Naive thymus-derived CD4-positive, alpha-beta T cell (primary cell): ENCODE measurements at regions of chr2 and their contacts with region 1.

Region 1: DNA sequence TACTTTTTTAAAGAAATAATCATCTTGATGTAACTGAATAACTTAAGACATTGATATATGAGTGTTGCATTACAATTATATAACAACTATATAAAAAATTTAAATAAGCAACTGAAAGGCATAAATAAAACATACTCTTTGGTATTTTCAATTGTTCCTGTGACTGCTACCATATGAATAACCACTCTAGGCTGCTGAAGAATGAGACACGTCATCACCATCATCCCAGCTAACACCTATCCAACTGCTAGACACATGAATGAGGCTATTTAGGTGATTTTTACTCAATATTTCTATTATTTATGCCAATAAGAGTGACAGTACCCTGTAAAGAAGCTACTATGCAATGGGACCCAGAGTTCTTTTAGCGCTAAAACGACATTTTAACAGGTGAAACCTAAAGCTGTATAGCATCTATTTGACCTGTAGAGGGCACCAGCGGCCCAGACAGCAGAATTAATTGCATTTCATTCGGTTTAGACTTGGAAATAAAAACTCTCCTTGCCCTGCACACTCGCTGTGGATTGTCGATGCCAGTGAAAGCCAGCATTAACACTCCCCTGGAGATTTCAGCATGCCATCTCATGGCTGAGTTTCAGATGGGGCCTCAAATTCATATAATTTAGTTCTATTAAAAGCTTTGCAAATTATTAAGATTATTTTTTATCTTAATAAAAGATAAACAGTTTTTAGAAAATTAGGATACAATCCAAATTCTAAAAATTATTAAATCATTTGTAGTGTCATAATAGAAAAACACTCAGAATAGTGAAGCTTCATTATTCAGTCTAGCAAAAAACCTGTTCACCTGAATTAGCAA is 89.4 kb upstream of the MAP2 start:
- DNase-seq: peak in 5 of 9 donors; percentile 0 to 23 (median 9)
- ATAC-seq: peak; percentile 29
- H3K4me3 ChIP-seq: no peak overlapping the region
- H3K4me3 Mint-ChIP-seq: no peak overlapping the region
- H3K27ac ChIP-seq: no peak overlapping the region
- H3K27ac Mint-ChIP-seq: no peak overlapping the region
- H3K4me1 ChIP-seq: no peaks in the 10 kb centered on the region
- H3K4me1 Mint-ChIP-seq: no peaks in the 10 kb centered on the region
- H3K27me3 ChIP-seq: no peaks in the 10 kb centered on the region
- H3K27me3 Mint-ChIP-seq: peaks cover 0 to 7% (median 3%) of the 10 kb centered on the region in 5 donors

Region 2: DNA sequence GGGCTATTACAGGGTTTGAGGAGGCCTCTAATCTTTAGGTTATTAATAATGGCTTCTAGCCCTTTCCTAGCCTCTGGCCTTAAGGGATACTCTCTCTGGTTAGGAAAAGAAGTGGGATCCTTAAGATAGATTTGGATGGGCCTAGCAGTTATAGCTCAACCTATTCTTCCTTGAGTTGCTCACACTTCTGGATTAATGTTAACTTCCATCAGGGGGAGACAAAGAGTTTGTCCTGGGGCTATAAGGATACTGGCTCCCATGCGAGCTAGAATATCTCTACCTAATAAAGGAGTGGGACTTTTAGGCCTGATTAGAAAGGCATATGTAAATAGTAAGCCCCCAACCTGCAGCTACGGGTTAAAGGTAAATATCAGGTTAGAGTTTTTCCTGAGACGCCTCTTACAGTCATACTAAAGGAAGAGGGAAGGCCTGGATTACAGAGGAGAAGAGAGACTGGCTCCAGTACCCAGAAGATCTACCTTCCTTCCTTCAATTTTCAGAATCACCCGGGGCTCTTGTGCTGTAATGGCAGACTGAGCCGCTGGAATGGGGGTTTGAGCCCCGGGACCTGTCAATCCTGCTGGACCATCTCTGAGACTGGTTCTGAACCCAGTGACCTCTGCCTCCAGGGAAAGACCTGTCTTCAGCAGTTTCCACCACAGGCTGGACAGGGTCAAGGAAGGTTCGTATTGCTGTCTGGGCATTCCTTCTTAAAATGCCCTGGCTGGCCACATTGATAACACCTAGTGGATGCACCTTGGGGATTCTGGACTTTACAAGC is 941.9 kb before region 1 on chr2:
- CTCF ChIA-PET with region 1: no interaction called
- POLR2A ChIA-PET with region 1: no interaction called
- intact Hi-C with region 1: loop called in 1 of 2 experiments (anchors 2 kb)
- DNase-seq: no peak
- ATAC-seq: no peak
- H3K4me3 ChIP-seq: no peak overlapping the region
- H3K4me3 Mint-ChIP-seq: no peak overlapping the region
- H3K27ac ChIP-seq: no peak overlapping the region
- H3K27ac Mint-ChIP-seq: no peak overlapping the region
- H3K4me1 ChIP-seq: no peaks in the 10 kb centered on the region
- H3K4me1 Mint-ChIP-seq: no peaks in the 10 kb centered on the region
- H3K27me3 ChIP-seq: no peaks in the 10 kb centered on the region
- H3K27me3 Mint-ChIP-seq: peaks cover 5 to 22% (median 11%) of the 10 kb centered on the region in 5 donors

Region 3: DNA sequence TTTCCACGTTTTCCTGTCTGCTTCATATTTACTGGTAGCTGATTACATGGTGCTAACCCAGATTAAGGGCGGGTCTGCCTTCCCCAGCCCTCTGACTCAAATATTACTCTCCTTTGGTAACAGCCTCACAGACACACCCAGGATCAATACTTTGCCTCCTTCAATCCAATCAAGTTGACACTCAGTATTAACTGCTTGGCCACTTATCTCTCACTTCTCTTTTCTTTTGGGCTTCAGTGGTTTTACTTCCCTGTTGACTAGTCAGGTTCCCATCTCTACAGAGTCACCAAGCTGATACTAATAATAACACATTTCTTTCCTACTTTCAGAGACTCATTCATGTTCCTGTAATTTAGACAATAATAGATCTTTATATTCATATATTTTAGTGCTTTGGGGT is 212.7 kb before region 1 on chr2:
- CTCF ChIA-PET with region 1: no interaction called
- POLR2A ChIA-PET with region 1: no interaction called
- intact Hi-C with region 1: no loop called
- DNase-seq: no peak
- ATAC-seq: peak; percentile 56
- H3K4me3 ChIP-seq: no peak overlapping the region
- H3K4me3 Mint-ChIP-seq: no peak overlapping the region
- H3K27ac ChIP-seq: no peak overlapping the region
- H3K27ac Mint-ChIP-seq: no peak overlapping the region
- H3K4me1 ChIP-seq: no peaks in the 10 kb centered on the region
- H3K4me1 Mint-ChIP-seq: no peaks in the 10 kb centered on the region
- H3K27me3 ChIP-seq: no peaks in the 10 kb centered on the region
- H3K27me3 Mint-ChIP-seq: no peaks in the 10 kb centered on the region

Region 4: DNA sequence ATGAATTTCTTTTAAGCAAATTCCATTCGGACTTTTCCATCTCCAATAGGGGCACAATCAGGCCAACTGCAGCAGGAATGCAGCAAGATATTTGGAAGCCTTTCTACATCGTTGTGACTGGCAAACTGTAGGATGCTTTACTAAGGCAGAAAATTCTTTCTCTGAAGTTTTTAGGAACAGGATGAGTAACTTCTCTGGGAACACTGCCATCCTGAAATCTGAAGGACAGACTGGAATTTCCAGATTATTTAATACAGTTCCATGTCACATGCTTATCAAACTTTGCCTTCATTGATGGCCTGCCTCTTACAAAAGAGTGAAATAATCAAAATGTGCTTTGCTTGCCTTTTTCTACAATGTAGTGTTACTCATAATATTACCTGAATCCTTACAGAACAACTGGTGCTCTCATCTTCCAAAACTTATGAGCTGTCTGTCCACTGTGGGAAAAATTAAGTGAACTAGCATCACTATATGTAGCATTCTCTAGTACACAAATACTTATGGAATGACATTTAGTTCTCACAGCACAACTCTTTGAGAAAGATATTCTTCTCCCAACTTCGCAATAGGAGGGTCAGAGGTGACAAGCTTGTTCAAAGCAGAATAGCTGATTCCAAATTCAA is 57.5 kb after region 1 on chr2:
- CTCF ChIA-PET with region 1: no interaction called
- POLR2A ChIA-PET with region 1: no interaction called
- intact Hi-C with region 1: no loop called
- DNase-seq: no peak
- ATAC-seq: no peak
- H3K4me3 ChIP-seq: no peak overlapping the region
- H3K4me3 Mint-ChIP-seq: no peak overlapping the region
- H3K27ac ChIP-seq: no peak overlapping the region
- H3K27ac Mint-ChIP-seq: no peak overlapping the region
- H3K4me1 ChIP-seq: no peaks in the 10 kb centered on the region
- H3K4me1 Mint-ChIP-seq: no peaks in the 10 kb centered on the region
- H3K27me3 ChIP-seq: no peaks in the 10 kb centered on the region
- H3K27me3 Mint-ChIP-seq: peaks cover 0 to 5% (median 0%) of the 10 kb centered on the region in 5 donors

Region 5: DNA sequence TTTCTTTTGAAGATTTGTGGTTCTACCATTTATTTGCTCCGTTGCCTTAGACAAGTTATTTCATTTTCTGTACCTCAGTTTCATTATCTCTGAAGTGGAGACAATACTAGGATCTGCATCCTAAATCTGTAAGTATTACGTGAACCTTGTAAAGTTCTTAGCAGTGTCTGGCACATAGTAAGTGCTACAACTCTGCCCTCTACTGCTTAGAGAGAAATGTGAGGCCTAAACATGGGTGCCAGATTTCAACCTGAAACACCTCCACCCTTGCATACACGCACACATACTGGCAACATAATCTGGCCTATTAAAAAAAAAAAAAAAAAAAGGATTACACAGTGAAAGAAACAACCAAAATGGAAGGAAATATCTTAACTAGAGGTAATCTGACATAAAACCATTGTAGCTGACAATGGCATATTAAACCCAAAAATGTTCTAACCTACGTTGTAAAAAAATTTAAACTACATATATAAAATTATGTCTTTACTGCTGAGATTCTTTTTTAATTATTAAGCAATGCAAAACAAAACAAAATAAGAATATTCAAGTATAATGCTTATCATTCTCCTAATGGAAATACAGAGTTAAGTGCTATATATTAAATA is 222.1 kb after region 1 on chr2:
- CTCF ChIA-PET with region 1: no interaction called
- POLR2A ChIA-PET with region 1: no interaction called
- intact Hi-C with region 1: loop called in 1 of 2 experiments (anchors 1 kb)
- DNase-seq: no peak
- ATAC-seq: no peak
- H3K4me3 ChIP-seq: no peak overlapping the region
- H3K4me3 Mint-ChIP-seq: no peak overlapping the region
- H3K27ac ChIP-seq: no peak overlapping the region
- H3K27ac Mint-ChIP-seq: no peak overlapping the region
- H3K4me1 ChIP-seq: no peaks in the 10 kb centered on the region
- H3K4me1 Mint-ChIP-seq: no peaks in the 10 kb centered on the region
- H3K27me3 ChIP-seq: no peaks in the 10 kb centered on the region
- H3K27me3 Mint-ChIP-seq: no peaks in the 10 kb centered on the region

Region 6: DNA sequence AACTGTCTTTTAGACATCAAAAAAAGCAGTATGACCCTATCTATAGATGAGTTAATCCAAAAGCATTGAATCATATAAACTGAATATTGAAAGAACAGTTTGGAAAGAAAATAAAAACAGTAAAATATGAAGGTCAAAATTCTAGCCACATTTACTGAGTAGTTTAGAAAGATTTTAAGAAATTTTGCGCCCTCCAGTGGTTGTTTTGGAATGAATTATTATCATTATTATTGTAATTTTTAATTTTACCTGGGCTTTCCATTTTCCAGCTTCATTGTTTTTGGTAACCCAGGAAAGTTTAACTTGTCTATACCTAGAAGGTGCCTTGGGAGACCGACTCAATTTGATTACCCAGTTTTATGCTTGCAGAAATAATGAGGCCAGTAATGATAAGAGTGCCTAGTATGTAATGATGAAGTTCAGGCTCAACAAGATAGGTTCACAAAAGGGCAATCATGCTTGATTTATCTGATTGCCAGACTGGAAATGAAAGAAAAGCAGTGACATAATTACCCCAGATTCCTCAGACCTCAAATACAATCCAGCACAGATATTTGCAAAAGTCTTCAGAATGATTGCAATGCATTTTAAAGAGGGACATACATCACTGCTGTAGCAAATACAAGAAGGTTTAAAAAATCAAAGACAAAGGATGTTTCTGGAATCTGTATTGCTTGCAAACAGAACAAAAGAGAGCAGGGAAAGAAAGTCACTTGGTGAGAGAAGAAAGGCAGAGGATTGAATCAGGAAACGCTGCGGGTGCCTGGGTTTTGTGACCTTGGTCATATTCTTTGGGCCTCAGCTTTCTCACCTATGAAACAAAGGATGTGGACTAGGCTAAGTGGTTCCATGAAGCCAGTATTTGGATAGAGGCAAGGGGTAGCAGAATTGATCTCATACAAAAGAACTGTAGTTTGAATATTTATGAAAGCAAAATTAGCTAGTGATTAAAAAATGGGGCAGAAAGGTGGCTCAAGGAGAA is 243.3 kb after region 1 on chr2:
- CTCF ChIA-PET with region 1: no interaction called
- POLR2A ChIA-PET with region 1: no interaction called
- intact Hi-C with region 1: loop called in 1 of 2 experiments (anchors 2 kb)
- DNase-seq: no peak
- ATAC-seq: no peak
- H3K4me3 ChIP-seq: no peak overlapping the region
- H3K4me3 Mint-ChIP-seq: no peak overlapping the region
- H3K27ac ChIP-seq: no peak overlapping the region
- H3K27ac Mint-ChIP-seq: no peak overlapping the region
- H3K4me1 ChIP-seq: no peaks in the 10 kb centered on the region
- H3K4me1 Mint-ChIP-seq: peaks cover 0 to 11% (median 4%) of the 10 kb centered on the region in 7 donors
- H3K27me3 ChIP-seq: no peaks in the 10 kb centered on the region
- H3K27me3 Mint-ChIP-seq: peaks cover 0 to 10% (median 4%) of the 10 kb centered on the region in 5 donors